HepG2 (cell line): ENCODE measurements at regions of chr16 and their contacts with region 1.

Region 1: DNA sequence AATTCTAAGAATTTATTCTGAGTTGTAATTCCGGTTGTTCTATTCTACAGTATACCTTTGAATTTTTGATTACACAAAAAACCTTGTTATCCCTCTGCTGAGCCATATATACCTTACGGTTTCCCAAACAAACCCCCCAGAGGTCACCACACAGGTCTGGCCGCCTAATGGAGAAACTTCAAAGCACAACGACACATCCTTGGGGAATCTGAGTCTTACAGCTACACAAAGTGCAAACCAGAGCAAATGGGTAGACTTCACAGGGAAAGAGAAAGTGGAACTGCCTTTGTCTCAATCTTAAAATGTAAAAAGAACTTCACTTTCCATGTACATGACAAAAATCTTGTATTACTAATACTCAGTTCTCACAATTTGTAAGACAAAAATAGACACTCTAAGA is 2.7 kb downstream of the FBXO31 start:
- DNase-seq: peak; percentile 67
- ATAC-seq: no peak
- H3K4me3 ChIP-seq: peak overlapping the region; percentile 82 to 96 (median 84)
- H3K27ac ChIP-seq: peak overlapping the region; percentile 100
- H3K4me1 ChIP-seq: peaks cover 59% of the 10 kb centered on the region
- H3K27me3 ChIP-seq: no peaks in the 10 kb centered on the region; a peak in 1 of 5 replicates
- CTCF ChIP-seq: no peak
- EP300 ChIP-seq: no peak; a peak in 1 of 4 replicates
- POLR2A ChIP-seq: no peak; a peak in 1 of 4 replicates
- RAD21 ChIP-seq: no peak

Region 2: GRCh38 chr16:87350681-87351319 is 30.1 kb before region 1 on chr16:
- CTCF ChIA-PET with region 1: no interaction called
- POLR2A ChIA-PET with region 1: interaction called, 265 read pairs
- in situ Hi-C with region 1: no loop called
- intact Hi-C with region 1: loop called (anchors 1 kb)
- DNase-seq: no peak
- ATAC-seq: no peak
- H3K4me3 ChIP-seq: no peak overlapping the region
- H3K27ac ChIP-seq: peak overlapping the region; percentile 6
- H3K4me1 ChIP-seq: peaks cover 17% of the 10 kb centered on the region
- H3K27me3 ChIP-seq: no peaks in the 10 kb centered on the region
- CTCF ChIP-seq: no peak
- EP300 ChIP-seq: no peak
- POLR2A ChIP-seq: no peak; a peak in 1 of 4 replicates
- RAD21 ChIP-seq: no peak

Region 3: DNA sequence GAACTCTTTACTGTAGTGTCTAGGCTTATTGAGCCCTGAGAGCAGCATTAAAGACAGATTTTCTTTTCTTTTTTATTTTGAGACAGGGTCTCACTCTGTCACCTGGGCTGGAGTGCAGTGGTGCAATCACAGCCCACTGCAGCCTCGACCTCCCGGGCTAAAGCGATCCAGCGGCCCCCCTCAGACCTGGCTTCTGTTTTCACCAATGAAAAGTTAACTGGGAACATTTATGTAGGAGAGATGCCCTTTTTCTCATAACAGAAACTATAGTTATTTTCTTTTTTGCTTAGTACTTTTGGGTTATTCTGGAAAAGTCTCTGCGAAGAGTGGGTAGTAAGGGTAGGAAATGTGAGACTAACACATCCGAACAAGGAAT is 12.8 kb after region 1 on chr16:
- CTCF ChIA-PET with region 1: no interaction called
- POLR2A ChIA-PET with region 1: interaction called, 125 read pairs
- in situ Hi-C with region 1: no loop called
- intact Hi-C with region 1: loop called (anchors 2 kb)
- DNase-seq: no peak
- ATAC-seq: no peak
- H3K4me3 ChIP-seq: peak overlapping the region; percentile 74 to 92 (median 83)
- H3K27ac ChIP-seq: peak overlapping the region; percentile 51
- H3K4me1 ChIP-seq: peaks cover 51% of the 10 kb centered on the region
- H3K27me3 ChIP-seq: no peaks in the 10 kb centered on the region; a peak in 1 of 5 replicates
- CTCF ChIP-seq: no peak
- EP300 ChIP-seq: no peak
- POLR2A ChIP-seq: no peak
- RAD21 ChIP-seq: no peak